ENCODE measurements at regions of chr2 and their contacts with region 1.

Region 1: GRCh38 chr2:25228848-25229278 is 60.5 kb upstream of the POMC start:
- DNase-seq: peak; percentile 80 to 84
- H3K4me3 ChIP-seq: no peak overlapping the region
- H3K27ac ChIP-seq: no peak overlapping the region; the same call in 1 of the 2 replicates
- H3K4me1 ChIP-seq: peaks cover 0 to 15% (median 12%) of the 10 kb centered on the region in 4 experiments; a peak in 5 of 7 replicates
- H3K27me3 ChIP-seq: no peaks in the 10 kb centered on the region
- CTCF ChIP-seq: peak; percentile 78 to 98 (median 96)
- EP300 ChIP-seq: no peak; a peak in 1 of 3 replicates
- POLR2A ChIP-seq: 0 out of 3 replicates have a peak, but pooled peaks of 1 of the 2 experiments have one; percentile 35
- RAD21 ChIP-seq: peak; percentile 59 to 74

Region 2: GRCh38 chr2:25197336-25198208 is 31.3 kb before region 1 on chr2:
- CTCF ChIA-PET with region 1: interaction called, 24 read pairs
- POLR2A ChIA-PET with region 1: interaction called, 4 read pairs
- DNase-seq: no peak
- H3K4me3 ChIP-seq: no peak overlapping the region
- H3K27ac ChIP-seq: no peak overlapping the region
- H3K4me1 ChIP-seq: no peaks in the 10 kb centered on the region; a peak in 1 of 7 replicates
- H3K27me3 ChIP-seq: no peaks in the 10 kb centered on the region
- CTCF ChIP-seq: no peak
- EP300 ChIP-seq: no peak
- POLR2A ChIP-seq: no peak
- RAD21 ChIP-seq: no peak

Region 3: DNA sequence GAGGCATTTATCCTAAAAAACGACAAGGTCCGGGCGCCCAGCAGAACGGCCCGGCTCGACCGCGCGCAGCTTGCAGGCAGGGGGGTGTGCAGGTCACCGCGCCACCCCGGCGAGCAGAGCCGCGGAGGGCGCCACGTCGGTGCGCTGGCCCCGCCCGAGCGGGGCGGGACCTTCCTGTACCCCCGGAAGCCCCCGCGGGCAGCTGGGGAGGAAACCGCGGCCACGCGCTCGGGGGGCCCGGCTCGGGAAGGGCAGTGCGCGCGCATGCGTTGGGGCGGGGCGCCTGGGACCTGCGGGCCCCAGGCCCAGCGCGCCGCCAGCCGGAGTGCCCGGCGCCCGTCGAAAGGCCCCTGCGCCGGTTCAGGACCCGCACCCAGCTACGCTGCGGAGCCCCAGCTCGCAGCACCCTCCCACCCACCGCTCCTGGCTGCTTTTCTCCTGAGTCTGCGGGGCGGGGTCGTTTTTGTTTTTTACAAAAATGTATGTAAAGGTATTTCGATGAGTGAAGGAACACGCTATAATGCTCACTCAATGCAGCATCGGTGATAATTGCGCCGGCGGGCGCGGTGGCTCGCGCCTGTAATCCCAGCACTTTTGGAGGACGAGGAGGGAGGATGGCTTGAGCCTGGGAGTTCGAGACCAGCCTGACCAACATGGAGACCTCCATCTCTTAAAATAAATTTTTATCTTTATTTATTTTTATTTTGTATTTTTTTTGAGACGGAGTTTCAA is 12.7 kb before region 1 on chr2:
- CTCF ChIA-PET with region 1: interaction called, 34 read pairs
- POLR2A ChIA-PET with region 1: interaction called, 44 read pairs
- DNase-seq: peak; percentile 59 to 93
- H3K4me3 ChIP-seq: peak overlapping the region; percentile 30 to 80 (median 46)
- H3K27ac ChIP-seq: no peak overlapping the region
- H3K4me1 ChIP-seq: peaks cover 0 to 4% (median 2%) of the 10 kb centered on the region in 4 experiments; a peak in 3 of 7 replicates
- H3K27me3 ChIP-seq: no peaks in the 10 kb centered on the region
- CTCF ChIP-seq: no peak
- EP300 ChIP-seq: no peak; a peak in 1 of 3 replicates
- POLR2A ChIP-seq: peak in 1 of 2 experiments; percentile 73; a peak in 1 of 3 replicates
- RAD21 ChIP-seq: no peak

Region 4: GRCh38 chr2:25252281-25253105 is 23.6 kb after region 1 on chr2:
- CTCF ChIA-PET with region 1: interaction called, 32 read pairs
- POLR2A ChIA-PET with region 1: interaction called, 69 read pairs
- DNase-seq: peak; percentile 83 to 88
- H3K4me3 ChIP-seq: peak overlapping the region; percentile 83 to 92 (median 86)
- H3K27ac ChIP-seq: peak overlapping the region; percentile 54; the same call in 1 of the 2 replicates
- H3K4me1 ChIP-seq: peaks cover 19 to 37% (median 24%) of the 10 kb centered on the region in 4 experiments
- H3K27me3 ChIP-seq: no peaks in the 10 kb centered on the region
- CTCF ChIP-seq: no peak
- EP300 ChIP-seq: no peak; a peak in 1 of 3 replicates
- POLR2A ChIP-seq: peak in 1 of 2 experiments; percentile 50; a peak in 2 of 3 replicates
- RAD21 ChIP-seq: no peak

Region 5: GRCh38 chr2:25521665-25522387 is 293.0 kb after region 1 on chr2:
- CTCF ChIA-PET with region 1: no interaction called
- POLR2A ChIA-PET with region 1: no interaction called
- DNase-seq: no peak
- H3K4me3 ChIP-seq: no peak overlapping the region
- H3K27ac ChIP-seq: no peak overlapping the region
- H3K4me1 ChIP-seq: no peaks in the 10 kb centered on the region
- H3K27me3 ChIP-seq: no peaks in the 10 kb centered on the region
- CTCF ChIP-seq: peak in 2 of 3 experiments; percentile 28 to 63; a peak in 2 of 4 replicates
- EP300 ChIP-seq: no peak
- POLR2A ChIP-seq: no peak
- RAD21 ChIP-seq: peak; percentile 65 to 67